ENCODE measurements at regions of chr7 and their contacts with region 1.

Region 1: DNA sequence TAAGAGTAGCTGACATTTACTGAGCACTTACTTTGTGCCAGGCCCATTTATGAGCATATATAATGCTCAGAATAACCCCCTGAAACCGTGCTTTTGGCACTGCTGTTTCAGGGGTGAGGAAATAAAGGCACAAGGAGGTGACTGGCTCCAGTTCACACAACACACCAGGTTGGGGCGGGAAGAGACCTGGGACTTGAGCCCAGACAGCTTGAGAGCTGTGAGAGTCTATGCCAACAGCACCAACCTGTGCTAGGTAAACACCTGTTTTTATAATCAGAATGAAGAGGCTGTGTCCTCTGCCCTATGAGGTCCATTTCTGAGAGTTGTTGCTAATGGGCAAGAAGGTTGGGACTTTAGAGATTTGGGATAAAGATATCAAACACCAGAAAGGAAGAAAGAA is 8.8 kb upstream of the AZGP1 start:
- DNase-seq: no peak
- ATAC-seq: no peak
- H3K4me3 ChIP-seq: no peak overlapping the region
- H3K4me3 Mint-ChIP-seq: no peak overlapping the region
- H3K27ac ChIP-seq: no peak overlapping the region
- H3K27ac Mint-ChIP-seq: no peak overlapping the region
- H3K4me1 ChIP-seq: peaks cover 5% of the 10 kb centered on the region
- H3K4me1 Mint-ChIP-seq: peaks cover 9% of the 10 kb centered on the region
- H3K27me3 ChIP-seq: no peaks in the 10 kb centered on the region
- H3K27me3 Mint-ChIP-seq: no peaks in the 10 kb centered on the region
- CTCF ChIP-seq: no peak

Region 2: DNA sequence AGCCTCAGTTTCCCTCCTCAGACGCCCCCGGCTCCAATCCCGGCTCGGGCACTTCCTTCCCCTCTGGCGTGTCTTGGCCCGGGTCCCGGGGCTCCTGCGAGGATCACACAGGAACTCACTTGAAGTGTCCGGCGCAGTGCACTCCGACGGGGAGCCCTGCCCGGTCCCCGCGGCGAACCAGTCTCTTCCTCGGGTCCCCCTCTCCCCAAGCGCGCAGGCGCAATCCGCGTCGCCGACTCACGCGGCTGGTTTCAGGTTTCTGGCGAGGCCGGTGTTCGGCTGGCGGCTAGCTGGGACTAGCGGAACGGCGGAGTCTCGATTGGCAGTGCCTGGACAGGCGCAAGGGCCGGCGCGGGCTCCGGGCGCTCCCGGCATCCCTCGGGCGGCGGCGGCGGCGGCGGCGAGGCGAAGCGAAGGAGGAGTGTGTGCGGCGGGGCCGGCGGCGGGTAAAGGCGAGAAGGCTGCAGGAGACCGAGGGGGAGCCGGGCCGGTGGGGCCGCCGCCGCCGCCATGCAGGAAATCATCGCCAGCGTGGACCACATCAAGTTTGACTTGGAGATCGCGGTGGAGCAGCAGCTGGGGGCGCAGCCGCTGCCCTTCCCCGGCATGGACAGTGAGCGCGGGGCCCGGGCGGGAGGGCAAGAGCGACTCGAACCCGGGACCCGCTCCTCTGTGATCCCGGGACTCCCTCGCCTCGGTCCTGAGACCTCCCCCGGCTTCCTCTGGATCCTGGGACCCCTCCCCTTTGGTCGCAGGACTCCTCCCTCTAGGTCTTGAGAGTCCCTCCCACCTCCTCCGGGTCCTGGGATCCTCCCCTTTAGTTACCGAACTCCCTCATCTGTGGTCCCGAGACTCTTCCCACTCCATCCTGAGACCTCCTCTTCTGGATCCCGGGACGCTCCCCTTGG is 545.8 kb before region 1 on chr7 and contains the starts of genes CPSF4 and PTCD1:
- CTCF ChIA-PET with region 1: no interaction called
- POLR2A ChIA-PET with region 1: no interaction called
- intact Hi-C with region 1: loop called in 1 of 2 experiments (anchors 10 kb)
- DNase-seq: peak; percentile 76 to 95 (median 86)
- ATAC-seq: peak; percentile 75
- H3K4me3 ChIP-seq: peak within 1 kb of the TSS; percentile 78
- H3K4me3 Mint-ChIP-seq: peak within 1 kb of the TSS; percentile 99
- H3K27ac ChIP-seq: peak within 1 kb of the TSS; percentile 69 to 80
- H3K27ac Mint-ChIP-seq: peak within 1 kb of the TSS; percentile 83
- H3K4me1 ChIP-seq: peaks cover 30% of the 10 kb centered on the region
- H3K4me1 Mint-ChIP-seq: peaks cover 31% of the 10 kb centered on the region
- H3K27me3 ChIP-seq: no peaks in the 10 kb centered on the region
- H3K27me3 Mint-ChIP-seq: no peaks in the 10 kb centered on the region
- CTCF ChIP-seq: no peak
- total RNA-seq, gene CPSF4: 28.1 to 31.7 TPM
- total RNA-seq, gene PTCD1: 4.8 to 5.3 TPM

Region 3: GRCh38 chr7:99459087-99459486 is 525.5 kb before region 1 on chr7:
- CTCF ChIA-PET with region 1: no interaction called
- POLR2A ChIA-PET with region 1: no interaction called
- intact Hi-C with region 1: no loop called
- DNase-seq: peak in 4 of 14 experiments; percentile 10 to 57 (median 32)
- ATAC-seq: peak; percentile 63
- H3K4me3 ChIP-seq: no peak overlapping the region
- H3K4me3 Mint-ChIP-seq: no peak overlapping the region
- H3K27ac ChIP-seq: no peak overlapping the region
- H3K27ac Mint-ChIP-seq: peak overlapping the region; percentile 53
- H3K4me1 ChIP-seq: peaks cover 32% of the 10 kb centered on the region
- H3K4me1 Mint-ChIP-seq: peaks cover 35% of the 10 kb centered on the region
- H3K27me3 ChIP-seq: no peaks in the 10 kb centered on the region
- H3K27me3 Mint-ChIP-seq: no peaks in the 10 kb centered on the region
- CTCF ChIP-seq: peak; percentile 11

Region 4: DNA sequence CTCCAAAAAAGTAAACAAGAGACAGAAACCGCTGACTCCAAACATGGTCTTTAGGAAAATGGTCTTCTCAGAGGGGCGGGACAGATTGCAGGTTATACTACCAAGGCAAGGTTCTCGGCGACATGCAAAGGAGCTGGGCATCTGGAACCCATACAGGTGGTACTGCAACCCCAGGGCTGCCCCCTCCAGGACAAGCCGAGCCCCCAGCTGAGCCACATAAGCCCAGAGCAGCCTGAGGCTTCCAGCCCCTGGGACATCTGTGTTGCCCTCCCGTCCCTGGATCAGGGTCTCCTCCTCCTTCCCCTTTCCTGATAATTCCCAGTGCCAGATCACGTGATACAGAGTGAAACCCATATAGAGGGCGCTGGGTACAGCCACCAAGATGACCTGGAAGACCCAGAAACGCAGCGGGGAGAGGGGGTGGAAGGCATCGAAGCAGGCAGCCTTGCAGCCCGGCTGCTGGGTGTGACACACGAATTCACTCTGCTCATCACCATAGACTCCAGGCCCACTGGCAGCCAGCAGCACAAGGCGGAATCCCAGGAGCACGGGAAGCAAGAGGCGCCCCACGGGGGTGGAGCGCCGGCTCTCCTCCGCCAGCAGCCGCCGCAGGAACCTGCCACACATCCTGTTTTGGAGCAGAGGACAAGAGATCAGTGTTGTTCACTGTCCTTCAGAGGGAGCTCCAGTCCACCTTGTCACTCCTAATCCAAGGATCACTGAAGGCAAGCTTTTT is 55.4 kb before region 1 on chr7 and contains the start of gene GJC3:
- CTCF ChIA-PET with region 1: no interaction called
- POLR2A ChIA-PET with region 1: no interaction called
- intact Hi-C with region 1: loop called in 1 of 2 experiments (anchors 5 kb)
- DNase-seq: peak; percentile 15 to 68 (median 45)
- ATAC-seq: peak; percentile 94
- H3K4me3 ChIP-seq: peak within 1 kb of the TSS; percentile 43
- H3K4me3 Mint-ChIP-seq: peak within 1 kb of the TSS; percentile 79
- H3K27ac ChIP-seq: no peak within 1 kb of the TSS
- H3K27ac Mint-ChIP-seq: peak within 1 kb of the TSS; percentile 61
- H3K4me1 ChIP-seq: peaks cover 18% of the 10 kb centered on the region
- H3K4me1 Mint-ChIP-seq: peaks cover 31% of the 10 kb centered on the region
- H3K27me3 ChIP-seq: peaks cover 0 to 13% of the 10 kb centered on the region in 2 experiments
- H3K27me3 Mint-ChIP-seq: peaks cover 6% of the 10 kb centered on the region
- CTCF ChIP-seq: no peak
- total RNA-seq, gene GJC3: 0.25 to 0.36 TPM

Region 5: GRCh38 chr7:100215895-100216294 is 231.3 kb after region 1 on chr7:
- CTCF ChIA-PET with region 1: no interaction called
- POLR2A ChIA-PET with region 1: no interaction called
- intact Hi-C with region 1: loop called in 1 of 2 experiments (anchors 2 kb)
- DNase-seq: no peak
- ATAC-seq: no peak
- H3K4me3 ChIP-seq: no peak overlapping the region
- H3K4me3 Mint-ChIP-seq: no peak overlapping the region
- H3K27ac ChIP-seq: no peak overlapping the region
- H3K27ac Mint-ChIP-seq: peak overlapping the region; percentile 40
- H3K4me1 ChIP-seq: peaks cover 52% of the 10 kb centered on the region
- H3K4me1 Mint-ChIP-seq: peaks cover 55% of the 10 kb centered on the region
- H3K27me3 ChIP-seq: no peaks in the 10 kb centered on the region
- H3K27me3 Mint-ChIP-seq: no peaks in the 10 kb centered on the region
- CTCF ChIP-seq: no peak

Region 6: GRCh38 chr7:101287032-101287431 is 1302.4 kb after region 1 on chr7:
- CTCF ChIA-PET with region 1: no interaction called
- POLR2A ChIA-PET with region 1: no interaction called
- intact Hi-C with region 1: loop called in 1 of 2 experiments (anchors 5 kb)
- DNase-seq: peak in 1 of 14 experiments; percentile 26
- ATAC-seq: no peak
- H3K4me3 ChIP-seq: no peak overlapping the region
- H3K4me3 Mint-ChIP-seq: no peak overlapping the region
- H3K27ac ChIP-seq: no peak overlapping the region
- H3K27ac Mint-ChIP-seq: no peak overlapping the region
- H3K4me1 ChIP-seq: peaks cover 13% of the 10 kb centered on the region
- H3K4me1 Mint-ChIP-seq: peaks cover 8% of the 10 kb centered on the region
- H3K27me3 ChIP-seq: peaks cover 4 to 6% of the 10 kb centered on the region in 2 experiments
- H3K27me3 Mint-ChIP-seq: peaks cover 26% of the 10 kb centered on the region
- CTCF ChIP-seq: no peak

Measured in CD4-positive, alpha-beta T cell (primary cell).